ENCODE measurements at regions of chrX and their contacts with region 1.

Region 1: DNA sequence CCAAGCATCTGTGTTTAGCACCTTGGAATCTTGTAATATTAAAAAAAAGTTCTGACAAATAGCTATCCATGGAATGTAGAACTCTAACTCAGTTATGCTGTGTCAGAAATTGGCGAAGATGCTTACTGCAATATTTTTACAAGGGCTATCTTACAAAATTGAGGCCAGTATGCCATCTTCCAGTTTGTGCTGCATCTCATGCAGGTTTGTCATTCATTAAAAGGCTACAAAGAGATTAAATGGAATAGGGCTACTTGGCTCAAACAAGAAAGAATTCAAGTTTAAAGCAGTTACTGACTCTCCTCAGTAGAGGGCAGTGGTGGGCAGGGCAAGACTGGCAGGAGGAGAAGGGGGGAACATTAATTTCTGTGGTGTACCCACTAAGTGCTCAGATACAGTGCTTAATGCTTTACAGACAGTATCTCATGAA is 66.5 kb downstream of the SHROOM4 start:
- H3K4me3 ChIP-seq: no peak overlapping the region
- H3K27ac ChIP-seq: no peak overlapping the region
- H3K4me1 ChIP-seq: no peaks in the 10 kb centered on the region
- CTCF ChIP-seq: no peak

Region 2: DNA sequence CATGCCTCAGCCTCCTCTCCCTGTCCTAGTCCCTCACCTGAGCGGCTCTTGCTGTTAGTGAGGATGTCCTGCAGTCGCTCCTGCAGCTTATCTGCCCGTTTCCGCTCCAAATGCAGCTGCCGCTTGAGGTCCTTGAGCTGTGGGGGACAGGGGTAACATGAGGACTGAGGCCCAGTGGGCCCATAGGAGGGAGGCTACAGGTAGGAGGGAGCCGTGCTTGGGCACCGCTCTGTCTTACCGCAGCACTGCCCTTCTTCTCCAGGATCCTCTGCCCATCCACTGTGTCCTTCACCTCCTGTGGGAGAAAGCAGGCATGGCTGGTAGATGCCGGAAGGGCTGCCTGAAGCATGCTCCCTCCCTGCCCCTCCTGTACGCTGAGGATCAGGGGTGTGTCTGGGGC is 1766.3 kb before region 1 on chrX:
- CTCF ChIA-PET with region 1: no interaction called
- POLR2A ChIA-PET with region 1: no interaction called
- H3K4me3 ChIP-seq: no peak overlapping the region
- H3K27ac ChIP-seq: no peak overlapping the region
- H3K4me1 ChIP-seq: no peaks in the 10 kb centered on the region
- CTCF ChIP-seq: no peak

Region 3: DNA sequence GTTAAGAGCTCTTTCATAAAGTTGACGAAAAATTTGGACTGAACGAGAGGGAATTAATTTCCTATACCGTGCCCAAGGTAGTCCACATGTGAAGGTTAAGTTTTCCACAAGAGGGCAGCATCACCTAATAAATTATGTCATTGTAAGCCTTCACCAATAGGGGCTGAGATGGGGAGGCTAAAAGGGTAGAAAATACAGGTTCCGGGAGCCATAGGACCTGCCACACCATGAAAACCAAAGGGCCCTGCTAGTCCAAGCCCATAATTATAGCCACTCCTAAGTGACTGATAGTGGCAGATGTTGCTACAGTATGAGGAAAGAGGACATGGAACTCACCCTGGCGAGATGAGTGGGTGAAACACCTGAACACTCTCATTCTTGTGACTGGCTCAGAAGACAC is 55.7 kb before region 1 on chrX:
- CTCF ChIA-PET with region 1: interaction called, 36 read pairs
- POLR2A ChIA-PET with region 1: no interaction called
- H3K4me3 ChIP-seq: no peak overlapping the region
- H3K27ac ChIP-seq: no peak overlapping the region
- H3K4me1 ChIP-seq: no peaks in the 10 kb centered on the region
- CTCF ChIP-seq: peak; percentile 33; the same call in 1 of the 2 replicates

Region 4: GRCh38 chrX:50905334-50905733 is 157.8 kb after region 1 on chrX:
- CTCF ChIA-PET with region 1: interaction called, 164 read pairs
- POLR2A ChIA-PET with region 1: no interaction called
- H3K4me3 ChIP-seq: no peak overlapping the region
- H3K27ac ChIP-seq: no peak overlapping the region
- H3K4me1 ChIP-seq: no peaks in the 10 kb centered on the region
- CTCF ChIP-seq: no peak

Region 5: DNA sequence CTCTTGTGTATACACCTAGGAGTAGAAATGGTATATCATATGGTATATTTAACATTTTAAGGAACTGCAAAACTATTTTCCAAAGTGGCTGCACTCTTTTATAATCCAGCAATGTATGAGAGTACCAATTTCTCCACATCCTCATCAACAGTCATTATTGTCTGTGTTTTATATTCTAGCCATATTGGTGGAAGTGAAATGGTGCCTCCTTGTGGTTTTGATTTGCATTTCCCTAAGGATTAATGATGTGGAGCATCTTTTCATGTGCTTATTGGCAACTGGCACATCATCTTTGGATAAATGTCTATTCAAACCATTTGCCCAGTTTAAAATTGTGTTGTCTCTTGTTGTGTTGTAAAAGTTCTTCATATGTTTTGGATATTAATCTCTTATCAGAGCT is 172.6 kb after region 1 on chrX:
- CTCF ChIA-PET with region 1: interaction called, 73 read pairs
- POLR2A ChIA-PET with region 1: no interaction called
- H3K4me3 ChIP-seq: no peak overlapping the region
- H3K27ac ChIP-seq: no peak overlapping the region
- H3K4me1 ChIP-seq: no peaks in the 10 kb centered on the region
- CTCF ChIP-seq: no peak

Region 6: DNA sequence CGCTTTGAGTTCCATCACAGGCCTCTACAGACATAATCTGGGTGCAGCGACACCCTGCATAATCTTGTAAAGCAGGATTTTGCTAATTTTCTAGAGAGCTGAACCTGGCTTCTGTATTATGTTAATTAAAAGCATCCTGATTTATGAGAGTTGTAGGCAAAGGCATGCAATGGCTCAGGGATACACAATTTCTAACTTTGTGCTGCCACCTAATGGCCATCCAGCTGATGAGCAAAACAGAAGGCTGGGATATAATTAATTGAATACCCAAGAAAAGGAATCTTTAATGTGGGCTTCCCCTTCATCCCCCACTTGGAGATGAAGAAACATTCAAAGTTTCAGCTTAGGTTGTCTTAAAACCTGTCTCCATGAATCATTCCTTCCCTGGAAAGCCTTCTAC is 241.2 kb after region 1 on chrX:
- CTCF ChIA-PET with region 1: interaction called, 15 read pairs
- POLR2A ChIA-PET with region 1: no interaction called
- H3K4me3 ChIP-seq: no peak overlapping the region
- H3K27ac ChIP-seq: no peak overlapping the region
- H3K4me1 ChIP-seq: no peaks in the 10 kb centered on the region
- CTCF ChIP-seq: no peak

Measured in HEK293 (cell line).